Activated CD4-positive, alpha-beta T cell treated with anti-CD3 and anti-CD28 coated beads for 36 hours (primary cell): ENCODE measurements at regions of chr14 and their contacts with region 1.

Region 1: DNA sequence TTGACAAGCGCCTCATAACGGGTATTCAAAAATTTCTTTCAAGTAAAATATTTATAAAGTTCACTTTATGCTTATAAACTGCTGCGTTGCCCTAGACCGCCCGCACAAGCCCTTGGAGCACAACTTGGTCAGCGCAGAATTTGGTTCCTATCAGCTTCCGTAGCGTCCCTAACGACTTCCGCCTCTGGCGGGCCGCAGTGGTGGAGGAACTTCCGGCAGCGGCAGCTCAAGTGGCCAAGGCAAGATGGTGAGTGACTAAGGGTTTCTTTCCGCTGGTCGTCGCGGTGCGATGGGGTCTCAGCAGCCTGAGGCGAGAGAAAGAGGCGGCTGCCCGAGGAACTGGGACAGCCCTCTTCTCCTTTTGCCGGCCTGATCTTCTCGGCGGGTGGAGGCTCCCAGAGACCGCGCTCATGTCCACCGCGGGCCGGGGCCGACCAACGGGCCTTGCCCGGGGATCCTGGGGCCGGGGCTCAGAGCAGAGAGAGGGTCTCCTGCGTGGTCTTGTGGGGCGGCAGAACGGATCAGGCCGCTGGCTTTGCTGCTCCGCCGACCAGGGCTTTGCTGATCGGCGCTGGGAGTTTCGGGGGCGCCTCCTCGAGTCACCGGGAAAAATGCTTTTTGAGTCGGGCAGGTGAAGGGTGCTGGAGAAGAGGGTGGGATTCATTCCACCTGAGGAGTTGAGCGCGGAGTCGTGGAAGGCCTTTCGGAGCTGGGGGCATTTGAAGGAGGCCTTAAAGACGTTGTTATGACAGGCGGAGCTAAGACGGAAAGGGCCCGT is at the start of gene PSMC1:
- DNase-seq: peak; percentile 94
- ATAC-seq: peak; percentile 97
- H3K4me3 Mint-ChIP-seq: peak within 1 kb of the TSS; percentile 99
- H3K27ac Mint-ChIP-seq: peak within 1 kb of the TSS; percentile 97
- H3K4me1 Mint-ChIP-seq: peaks cover 26% of the 10 kb centered on the region
- H3K27me3 Mint-ChIP-seq: no peaks in the 10 kb centered on the region
- total RNA-seq, gene PSMC1: 77.3 to 127 TPM

Region 2: DNA sequence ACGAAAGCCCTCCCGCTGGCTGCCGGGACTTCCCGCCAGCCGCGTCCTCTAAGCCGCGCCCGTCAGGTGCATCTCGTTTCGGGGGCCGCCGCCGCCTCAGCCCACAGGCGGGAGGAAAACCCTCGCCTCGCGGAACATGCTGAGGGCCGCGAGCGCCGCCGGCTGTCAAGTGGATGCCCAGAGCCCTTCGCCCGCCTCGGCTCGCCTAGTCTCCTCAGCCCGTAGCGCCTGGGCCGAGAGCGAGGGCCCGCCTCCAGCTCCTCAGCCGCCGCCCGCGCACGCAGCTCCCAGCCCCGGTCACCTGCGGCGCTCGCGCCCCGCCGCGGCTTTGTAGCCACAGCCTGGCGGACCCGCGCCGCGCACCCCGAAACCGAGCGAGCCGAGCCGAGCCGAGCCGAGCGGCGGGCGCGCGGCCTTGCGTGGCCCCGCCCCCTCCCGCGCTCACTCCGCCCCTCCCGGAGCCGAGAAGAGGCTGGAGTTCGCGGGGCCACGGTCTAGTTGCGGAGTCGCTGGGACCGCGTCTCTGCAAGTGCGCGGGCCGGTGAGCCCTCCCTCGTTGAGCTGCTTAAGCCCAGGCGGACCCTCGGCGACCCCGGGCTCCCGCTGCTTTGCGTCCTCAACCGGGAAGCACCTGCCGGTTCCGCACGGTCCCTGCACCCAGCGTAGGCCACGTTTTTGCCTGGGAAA is 1463.8 kb before region 1 on chr14 and contains the start of gene EML5:
- CTCF ChIA-PET with region 1: no interaction called
- POLR2A ChIA-PET with region 1: no interaction called
- intact Hi-C with region 1: loop called in 1 of 2 experiments (anchors 2 kb)
- DNase-seq: peak; percentile 90
- ATAC-seq: peak; percentile 76
- H3K4me3 Mint-ChIP-seq: peak within 1 kb of the TSS; percentile 87
- H3K27ac Mint-ChIP-seq: peak within 1 kb of the TSS; percentile 87
- H3K4me1 Mint-ChIP-seq: peaks cover 26% of the 10 kb centered on the region
- H3K27me3 Mint-ChIP-seq: no peaks in the 10 kb centered on the region
- total RNA-seq, gene EML5: 8.1 TPM

Region 3: GRCh38 chr14:90266441-90267154 is 10.1 kb after region 1 on chr14:
- CTCF ChIA-PET with region 1: interaction called, 7 read pairs
- POLR2A ChIA-PET with region 1: interaction called, 15 read pairs
- intact Hi-C with region 1: no loop called
- DNase-seq: no peak
- ATAC-seq: no peak
- H3K4me3 Mint-ChIP-seq: no peak overlapping the region
- H3K27ac Mint-ChIP-seq: no peak overlapping the region
- H3K4me1 Mint-ChIP-seq: peaks cover 3% of the 10 kb centered on the region
- H3K27me3 Mint-ChIP-seq: no peaks in the 10 kb centered on the region

Region 4: GRCh38 chr14:90331497-90332435 is 75.2 kb after region 1 on chr14 and contains the start of gene NRDE2:
- CTCF ChIA-PET with region 1: no interaction called
- POLR2A ChIA-PET with region 1: no interaction called
- intact Hi-C with region 1: loop called in 1 of 2 experiments (anchors 1 kb)
- DNase-seq: peak; percentile 99
- ATAC-seq: peak; percentile 99
- H3K4me3 Mint-ChIP-seq: peak within 1 kb of the TSS; percentile 89
- H3K27ac Mint-ChIP-seq: peak within 1 kb of the TSS; percentile 93
- H3K4me1 Mint-ChIP-seq: peaks cover 23% of the 10 kb centered on the region
- H3K27me3 Mint-ChIP-seq: peaks cover 2% of the 10 kb centered on the region
- total RNA-seq, gene NRDE2: 22.8 to 25.3 TPM